ENCODE measurements at regions of chr11 and their contacts with region 1.

Region 1: GRCh38 chr11:65540297-65541092 is 15.6 kb downstream of the SCYL1 start:
- DNase-seq: peak; percentile 73
- H3K4me3 ChIP-seq: peak overlapping the region; percentile 40 to 82 (median 56)
- H3K27ac ChIP-seq: peak overlapping the region; percentile 92 to 98 (median 96)
- H3K4me1 ChIP-seq: peaks cover 21 to 41% (median 25%) of the 10 kb centered on the region in 3 donors
- H3K27me3 ChIP-seq: no peaks in the 10 kb centered on the region
- CTCF ChIP-seq: peak; percentile 82 to 95 (median 94)
- POLR2A ChIP-seq: peak in 2 of 4 donors; percentile 7 to 41

Region 2: GRCh38 chr11:65471410-65471762 is 69.1 kb before region 1 on chr11:
- intact Hi-C with region 1: no loop called
- DNase-seq: no peak
- H3K4me3 ChIP-seq: peak overlapping the region in 2 of 4 donors; percentile 21 to 48
- H3K27ac ChIP-seq: peak overlapping the region; percentile 88 to 98 (median 94)
- H3K4me1 ChIP-seq: peaks cover 26 to 74% (median 40%) of the 10 kb centered on the region in 3 donors
- H3K27me3 ChIP-seq: no peaks in the 10 kb centered on the region
- CTCF ChIP-seq: peak in 5 of 6 experiments; percentile 50 to 58 (median 54)
- POLR2A ChIP-seq: no peak

Region 3: GRCh38 chr11:65569973-65570918 is 29.8 kb after region 1 on chr11 and contains the start of gene ZNRD2:
- intact Hi-C with region 1: loop called (anchors 5 kb)
- DNase-seq: peak; percentile 95
- H3K4me3 ChIP-seq: peak within 1 kb of the TSS; percentile 53 to 92 (median 84)
- H3K27ac ChIP-seq: peak within 1 kb of the TSS; percentile 96 to 99 (median 98)
- H3K4me1 ChIP-seq: peaks cover 45 to 88% (median 46%) of the 10 kb centered on the region in 3 donors
- H3K27me3 ChIP-seq: no peaks in the 10 kb centered on the region
- CTCF ChIP-seq: peak in 5 of 6 experiments; percentile 15 to 37 (median 19)
- POLR2A ChIP-seq: peak in 3 of 4 donors; percentile 73 to 82 (median 75)
- total RNA-seq, gene ZNRD2: 33.2 to 48.0 (median 40.0) TPM

Region 4: DNA sequence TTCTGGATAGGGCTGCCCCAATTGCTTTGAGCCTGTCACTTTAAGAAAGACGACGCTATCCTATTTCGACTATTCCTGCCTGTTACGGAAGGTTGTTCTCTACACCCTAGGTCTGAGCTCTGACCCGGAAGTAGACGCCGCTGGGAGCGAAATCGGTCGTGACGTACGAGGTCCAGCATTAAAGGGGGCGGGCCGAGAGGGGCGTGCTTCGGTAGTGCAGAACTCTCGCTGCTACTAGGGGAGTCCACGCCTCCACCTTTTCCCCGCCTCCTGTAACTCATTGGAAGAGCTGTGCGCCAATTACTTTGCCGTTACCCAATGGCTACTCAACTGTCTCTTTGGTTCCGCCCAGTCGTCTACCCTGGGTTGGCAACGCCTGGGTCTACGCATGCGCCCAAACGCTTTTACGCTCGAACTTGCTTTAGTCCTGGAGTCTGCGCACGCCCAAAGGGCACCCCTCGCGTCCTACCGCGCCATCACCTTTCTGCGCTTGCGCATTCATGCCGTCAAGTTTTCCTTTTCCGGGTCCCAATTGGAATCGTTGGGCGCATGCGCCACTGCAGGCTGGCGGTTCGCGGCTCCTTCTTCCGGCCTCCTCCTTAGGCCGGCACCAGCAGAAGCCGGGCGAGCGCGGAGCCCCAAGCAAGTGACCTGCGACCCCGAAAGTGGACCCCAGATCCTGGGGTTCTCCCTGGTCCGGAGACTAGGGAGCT is 74.9 kb after region 1 on chr11 and contains the start of gene PCNX3:
- intact Hi-C with region 1: loop called (anchors 10 kb)
- DNase-seq: peak; percentile 99
- H3K4me3 ChIP-seq: peak within 1 kb of the TSS; percentile 81 to 99 (median 96)
- H3K27ac ChIP-seq: peak within 1 kb of the TSS; percentile 96 to 98 (median 98)
- H3K4me1 ChIP-seq: peaks cover 38 to 63% (median 46%) of the 10 kb centered on the region in 3 donors
- H3K27me3 ChIP-seq: no peaks in the 10 kb centered on the region
- CTCF ChIP-seq: peak in 1 of 6 experiments; percentile 8
- POLR2A ChIP-seq: peak in 3 of 4 donors; percentile 53 to 72 (median 59)
- total RNA-seq, gene PCNX3: 24.0 to 40.0 (median 30.9) TPM

Measured in esophagus squamous epithelium (tissue), 5 donors.